K562 (cell line): ENCODE measurements at regions of chr5 and their contacts with region 1.

Region 1: DNA sequence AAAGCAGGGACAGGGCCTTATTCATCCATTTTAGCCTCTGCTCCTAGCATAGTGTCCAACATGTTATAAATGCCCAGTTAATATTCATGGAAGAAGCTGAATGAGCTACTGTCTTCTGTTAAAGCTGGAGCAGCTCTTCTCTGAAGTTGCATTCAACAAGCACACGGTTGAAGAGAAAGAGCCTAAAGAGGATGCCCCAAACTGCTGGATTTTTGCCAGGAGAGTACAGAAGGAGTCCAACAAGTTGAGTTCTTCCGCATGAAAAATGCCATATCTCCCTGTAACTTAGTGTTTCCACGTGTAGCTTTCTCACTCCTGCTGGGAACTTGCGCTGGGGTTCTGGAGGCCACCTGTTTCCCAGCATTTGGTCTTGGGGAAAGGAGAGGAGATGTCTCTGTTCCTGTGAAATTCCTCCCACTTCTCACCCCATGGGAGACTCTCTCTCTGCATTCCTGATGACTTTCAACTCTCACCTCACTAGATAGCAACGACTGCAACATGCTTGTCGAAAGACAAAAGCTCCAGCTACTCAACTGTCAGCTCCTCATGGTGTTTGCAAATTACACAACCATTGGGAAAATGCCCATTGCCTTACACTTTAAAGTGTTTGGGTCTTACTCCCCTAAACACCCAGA is 122.8 kb downstream of the KIF4B start:
- DNase-seq: no peak
- ATAC-seq: no peak
- H3K4me3 ChIP-seq: no peak overlapping the region
- H3K27ac ChIP-seq: no peak overlapping the region
- H3K4me1 ChIP-seq: no peaks in the 10 kb centered on the region
- H3K27me3 ChIP-seq: no peaks in the 10 kb centered on the region
- CTCF ChIP-seq: no peak
- EP300 ChIP-seq: no peak
- POLR2A ChIP-seq: no peak
- RAD21 ChIP-seq: no peak

Region 2: DNA sequence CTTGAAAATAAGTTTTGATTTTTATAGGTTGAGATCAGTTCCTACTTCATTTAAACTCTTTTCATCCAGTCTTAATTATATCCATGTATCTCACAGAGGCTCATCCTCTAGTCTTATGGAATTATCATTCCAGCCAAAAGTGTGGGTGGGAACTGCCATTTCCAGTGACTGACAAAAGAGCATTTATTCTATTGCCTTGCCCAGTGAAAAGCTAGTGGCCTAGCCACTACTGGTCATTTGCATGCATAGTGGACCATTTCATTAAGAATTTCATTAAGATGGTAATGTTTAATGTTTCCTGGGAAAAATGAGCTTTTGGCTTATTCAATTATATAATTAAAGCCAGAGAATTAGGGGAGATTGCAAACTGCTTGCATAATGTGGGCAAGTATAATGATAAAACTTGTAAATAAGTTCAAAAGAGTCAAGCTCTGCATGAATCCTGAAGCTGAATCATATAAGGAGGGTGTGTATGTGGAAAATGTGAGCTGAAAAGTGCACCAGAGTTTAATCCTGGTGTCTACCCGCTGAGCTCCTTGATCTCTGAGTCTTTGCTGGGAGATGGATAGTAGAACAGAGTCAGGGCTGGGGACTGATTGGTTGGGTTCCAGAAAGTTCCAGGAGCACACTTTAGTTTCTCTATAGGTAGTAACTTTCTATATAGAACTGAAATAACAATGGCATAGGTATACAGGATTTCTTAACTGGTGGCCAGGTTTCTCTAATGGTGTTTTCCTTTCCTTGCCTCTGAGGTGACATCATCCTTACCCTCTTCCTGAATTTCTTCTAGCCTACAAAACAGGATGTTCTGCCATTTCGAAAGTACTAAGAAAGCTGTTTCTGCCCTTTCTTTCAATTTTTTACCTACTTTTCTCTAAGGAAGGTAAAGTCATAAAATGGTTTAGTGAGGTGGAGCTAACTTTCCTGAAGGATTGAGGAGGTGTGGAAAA is 44.3 kb before region 1 on chr5:
- CTCF ChIA-PET with region 1: no interaction called
- POLR2A ChIA-PET with region 1: no interaction called
- in situ Hi-C with region 1: no loop called
- intact Hi-C with region 1: no loop called
- DNase-seq: no peak
- ATAC-seq: no peak
- H3K4me3 ChIP-seq: no peak overlapping the region
- H3K27ac ChIP-seq: no peak overlapping the region
- H3K4me1 ChIP-seq: no peaks in the 10 kb centered on the region
- H3K27me3 ChIP-seq: no peaks in the 10 kb centered on the region
- CTCF ChIP-seq: no peak
- EP300 ChIP-seq: no peak
- POLR2A ChIP-seq: no peak
- RAD21 ChIP-seq: no peak

Region 3: DNA sequence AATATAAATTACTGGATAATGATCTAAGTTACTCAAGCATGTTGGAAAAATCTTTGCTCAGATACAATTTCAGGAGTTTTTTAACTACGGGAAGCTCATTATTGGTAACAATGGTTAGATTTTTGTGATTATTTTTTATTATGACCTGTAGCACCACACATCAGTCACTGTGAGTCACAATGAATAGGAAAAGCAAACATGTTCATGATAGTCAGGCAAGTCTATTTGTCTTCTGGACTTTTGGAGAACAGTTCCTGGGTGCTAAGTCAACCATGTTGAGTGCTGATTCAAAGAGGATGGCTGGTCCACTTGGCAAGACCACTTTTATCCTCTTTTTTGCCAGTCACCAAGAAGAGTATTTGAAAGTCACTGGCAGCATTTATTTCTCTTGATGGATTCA is 280.4 kb after region 1 on chr5:
- CTCF ChIA-PET with region 1: no interaction called
- POLR2A ChIA-PET with region 1: no interaction called
- in situ Hi-C with region 1: no loop called
- intact Hi-C with region 1: no loop called
- DNase-seq: no peak
- ATAC-seq: no peak
- H3K4me3 ChIP-seq: no peak overlapping the region
- H3K27ac ChIP-seq: no peak overlapping the region
- H3K4me1 ChIP-seq: no peaks in the 10 kb centered on the region
- H3K27me3 ChIP-seq: no peaks in the 10 kb centered on the region
- CTCF ChIP-seq: no peak
- EP300 ChIP-seq: no peak
- POLR2A ChIP-seq: no peak
- RAD21 ChIP-seq: no peak

Region 4: GRCh38 chr5:156271569-156271968 is 1135.2 kb after region 1 on chr5:
- CTCF ChIA-PET with region 1: no interaction called
- POLR2A ChIA-PET with region 1: no interaction called
- in situ Hi-C with region 1: no loop called
- intact Hi-C with region 1: no loop called
- DNase-seq: no peak
- ATAC-seq: no peak
- H3K4me3 ChIP-seq: no peak overlapping the region
- H3K27ac ChIP-seq: no peak overlapping the region
- H3K4me1 ChIP-seq: no peaks in the 10 kb centered on the region
- H3K27me3 ChIP-seq: no peaks in the 10 kb centered on the region
- CTCF ChIP-seq: no peak
- EP300 ChIP-seq: no peak
- POLR2A ChIP-seq: no peak
- RAD21 ChIP-seq: no peak

Region 5: DNA sequence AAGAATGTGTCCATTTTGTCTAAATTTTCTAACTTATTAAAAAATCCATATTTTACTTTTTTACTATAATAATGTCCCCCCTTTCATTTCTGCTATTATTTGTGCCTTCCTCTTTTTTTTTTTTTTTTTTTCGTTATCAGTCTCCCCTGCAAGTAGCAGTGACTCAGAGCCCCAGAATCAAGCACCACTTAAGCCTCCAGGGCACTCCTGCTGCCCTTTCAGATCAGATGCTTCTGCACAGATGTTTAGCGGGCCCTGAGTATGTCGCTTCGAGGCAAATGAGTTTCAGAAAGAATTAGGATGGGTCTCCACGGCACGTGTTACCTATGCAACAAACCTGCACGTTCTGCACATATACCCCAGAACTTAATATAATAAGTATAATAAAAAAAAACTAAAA is 1994.6 kb after region 1 on chr5:
- CTCF ChIA-PET with region 1: no interaction called
- POLR2A ChIA-PET with region 1: no interaction called
- in situ Hi-C with region 1: loop called (anchors 10 kb)
- intact Hi-C with region 1: loop called (anchors 5 kb)
- DNase-seq: peak in 2 of 4 experiments; percentile 23 to 25
- ATAC-seq: peak; percentile 61
- H3K4me3 ChIP-seq: no peak overlapping the region
- H3K27ac ChIP-seq: no peak overlapping the region
- H3K4me1 ChIP-seq: no peaks in the 10 kb centered on the region; a peak in 1 of 5 replicates
- H3K27me3 ChIP-seq: no peaks in the 10 kb centered on the region
- CTCF ChIP-seq: no peak
- EP300 ChIP-seq: no peak
- POLR2A ChIP-seq: no peak
- RAD21 ChIP-seq: no peak